RWPE1 (cell line): ENCODE measurements at regions of chr16 and their contacts with region 1.

Region 1: DNA sequence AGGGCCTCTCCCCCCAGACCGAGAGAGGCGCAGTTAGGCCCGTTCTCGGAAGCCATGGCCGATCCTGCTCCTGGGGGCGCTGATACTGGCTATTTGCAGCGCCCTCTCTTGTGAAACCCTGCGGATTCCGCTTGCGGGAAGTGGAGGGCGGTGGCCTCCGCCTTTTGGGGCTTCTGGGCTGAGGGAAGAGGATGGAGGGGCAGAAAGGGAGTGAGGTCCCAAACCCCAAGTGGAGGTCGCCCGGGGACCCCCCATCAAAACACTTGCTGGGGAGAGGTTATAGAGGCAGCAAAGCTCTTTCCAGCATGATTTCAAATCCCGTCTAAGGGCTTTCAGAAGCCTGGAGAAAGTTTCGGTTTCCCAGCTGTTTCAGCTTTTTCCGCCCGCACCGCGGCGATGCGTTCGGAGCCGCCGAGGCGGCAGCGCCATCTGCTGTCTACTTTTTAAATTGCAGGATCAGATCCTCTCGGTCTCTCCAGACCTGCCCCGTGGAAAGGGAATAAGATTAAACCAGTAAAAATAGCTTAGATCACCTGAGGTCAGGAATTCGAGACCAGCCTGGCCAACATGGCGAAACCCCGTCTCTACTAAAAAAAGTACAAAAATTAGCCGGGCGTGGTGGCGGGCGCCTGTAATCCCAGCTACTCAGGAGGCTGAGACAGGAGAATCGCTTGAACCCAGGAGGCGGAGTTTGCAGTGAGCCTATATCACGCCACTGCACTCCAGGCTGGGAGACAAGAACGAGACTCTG is 15.8 kb downstream of the SNX20 start:
- DNase-seq: peak; percentile 80
- H3K27ac ChIP-seq: no peak overlapping the region
- CTCF ChIP-seq: peak; percentile 88

Region 2: GRCh38 chr16:50323335-50324011 is 341.8 kb before region 1 on chr16:
- CTCF ChIA-PET with region 1: interaction called, 14 read pairs
- POLR2A ChIA-PET with region 1: no interaction called
- DNase-seq: peak; percentile 47
- H3K27ac ChIP-seq: no peak overlapping the region
- CTCF ChIP-seq: 0 out of 2 replicates have a peak, but pooled peaks have one; percentile 9

Region 3: GRCh38 chr16:50373780-50374179 is 291.5 kb before region 1 on chr16:
- CTCF ChIA-PET with region 1: interaction called, 18 read pairs
- POLR2A ChIA-PET with region 1: no interaction called
- DNase-seq: no peak
- H3K27ac ChIP-seq: no peak overlapping the region
- CTCF ChIP-seq: no peak

Region 4: GRCh38 chr16:50744881-50745280 is 79.6 kb after region 1 on chr16:
- CTCF ChIA-PET with region 1: interaction called, 11 read pairs
- POLR2A ChIA-PET with region 1: no interaction called
- DNase-seq: peak; percentile 62
- H3K27ac ChIP-seq: no peak overlapping the region
- CTCF ChIP-seq: no peak

Region 5: GRCh38 chr16:50806099-50807062 is 141.1 kb after region 1 on chr16:
- CTCF ChIA-PET with region 1: interaction called, 11 read pairs
- POLR2A ChIA-PET with region 1: no interaction called
- DNase-seq: peak; percentile 89
- H3K27ac ChIP-seq: no peak overlapping the region
- CTCF ChIP-seq: peak; percentile 97

Region 6: DNA sequence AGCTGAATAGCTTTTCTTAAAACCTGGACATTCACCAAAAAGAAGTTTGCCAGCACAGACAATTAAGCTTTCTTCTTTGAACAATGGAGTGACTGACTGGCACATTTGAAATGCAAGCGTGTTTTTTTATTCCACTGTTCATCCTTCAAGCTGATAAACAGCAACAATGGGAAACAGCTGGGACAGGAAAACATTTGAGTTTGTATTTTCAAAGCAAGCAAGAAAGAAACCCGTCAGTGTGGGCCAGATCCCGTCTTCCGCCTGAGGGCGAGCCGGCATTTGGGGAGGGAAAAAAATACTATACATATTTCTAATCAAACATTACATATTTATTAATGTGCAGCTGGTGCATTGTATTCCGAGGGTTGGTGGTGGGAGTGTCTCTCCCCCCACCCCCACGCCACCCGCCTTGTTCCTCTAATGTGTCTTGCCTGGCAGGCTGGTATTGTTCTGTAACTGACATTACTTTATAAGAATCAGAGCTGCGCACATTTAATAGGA is 170.9 kb after region 1 on chr16:
- CTCF ChIA-PET with region 1: no interaction called
- POLR2A ChIA-PET with region 1: no interaction called
- DNase-seq: no peak
- H3K27ac ChIP-seq: no peak overlapping the region
- CTCF ChIP-seq: no peak